Prostate gland (tissue), 2 donors: ENCODE measurements at regions of chr2 and their contacts with region 1.

Region 1: GRCh38 chr2:222993920-222994650 is 57.9 kb upstream of the KCNE4 start:
- DNase-seq: peak; percentile 43
- H3K4me3 ChIP-seq: no peak overlapping the region
- H3K27ac ChIP-seq: peak overlapping the region; percentile 59 to 64
- H3K4me1 ChIP-seq: no peaks in the 10 kb centered on the region
- H3K27me3 ChIP-seq: no peaks in the 10 kb centered on the region
- CTCF ChIP-seq: no peak
- POLR2A ChIP-seq: no peak

Region 2: GRCh38 chr2:223203971-223204929 is 210.2 kb after region 1 on chr2:
- intact Hi-C with region 1: loop called (anchors 10 kb)
- DNase-seq: no peak
- H3K4me3 ChIP-seq: no peak overlapping the region
- H3K27ac ChIP-seq: no peak overlapping the region
- H3K4me1 ChIP-seq: no peaks in the 10 kb centered on the region
- H3K27me3 ChIP-seq: no peaks in the 10 kb centered on the region
- CTCF ChIP-seq: no peak
- POLR2A ChIP-seq: no peak